ENCODE measurements at regions of chr12 and their contacts with region 1.

Region 1: GRCh38 chr12:116880817-116881324 is 370 bp downstream of the HRK start:
- DNase-seq: peak in 2 of 10 donors; percentile 52 to 56
- H3K4me3 ChIP-seq: peak overlapping the region; percentile 8 to 71 (median 56)
- H3K27ac ChIP-seq: peak overlapping the region in 3 of 59 donors; percentile 16 to 44 (median 44)
- H3K27me3 ChIP-seq: peaks cover 0 to 55% (median 23%) of the 10 kb centered on the region in 45 donors
- CTCF ChIP-seq: peak in 2 of 56 donors; percentile 8 to 24

Region 2: DNA sequence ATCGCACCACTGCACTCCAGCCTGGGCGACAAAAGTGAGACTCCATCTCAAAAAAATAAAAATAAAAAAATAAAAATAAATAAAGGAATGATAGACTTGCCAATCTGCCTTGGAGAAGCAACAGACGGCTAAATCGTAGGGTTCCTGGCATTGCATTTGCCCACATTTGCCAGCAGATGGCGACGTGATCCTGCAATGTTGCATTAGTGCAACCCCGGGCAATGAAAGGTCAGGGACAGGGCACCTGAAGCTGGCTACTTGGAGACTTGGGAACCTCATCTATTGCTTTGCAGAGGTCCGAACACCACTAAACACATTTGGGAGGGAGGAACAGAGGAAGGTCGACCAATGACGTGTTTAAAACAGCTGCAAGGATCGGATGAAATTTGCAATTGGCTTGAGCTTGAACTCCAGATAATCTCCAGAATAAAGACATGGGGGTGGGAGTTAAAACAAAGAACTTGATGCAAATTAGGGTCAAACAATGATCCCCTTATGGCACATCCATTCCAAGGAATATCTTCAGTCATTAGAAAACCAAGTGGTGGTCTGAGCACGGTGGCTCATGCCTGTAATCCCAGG is 177.6 kb before region 1 on chr12:
- intact Hi-C with region 1: loop called in 1 of 2 experiments (anchors 2 kb)
- DNase-seq: peak; percentile 64 to 83 (median 70)
- H3K4me3 ChIP-seq: peak overlapping the region in 1 of 59 donors; percentile 9
- H3K27ac ChIP-seq: peak overlapping the region in 6 of 59 donors; percentile 6 to 68 (median 20)
- H3K27me3 ChIP-seq: no peaks in the 10 kb centered on the region
- CTCF ChIP-seq: peak; percentile 83 to 98 (median 92)

Region 3: DNA sequence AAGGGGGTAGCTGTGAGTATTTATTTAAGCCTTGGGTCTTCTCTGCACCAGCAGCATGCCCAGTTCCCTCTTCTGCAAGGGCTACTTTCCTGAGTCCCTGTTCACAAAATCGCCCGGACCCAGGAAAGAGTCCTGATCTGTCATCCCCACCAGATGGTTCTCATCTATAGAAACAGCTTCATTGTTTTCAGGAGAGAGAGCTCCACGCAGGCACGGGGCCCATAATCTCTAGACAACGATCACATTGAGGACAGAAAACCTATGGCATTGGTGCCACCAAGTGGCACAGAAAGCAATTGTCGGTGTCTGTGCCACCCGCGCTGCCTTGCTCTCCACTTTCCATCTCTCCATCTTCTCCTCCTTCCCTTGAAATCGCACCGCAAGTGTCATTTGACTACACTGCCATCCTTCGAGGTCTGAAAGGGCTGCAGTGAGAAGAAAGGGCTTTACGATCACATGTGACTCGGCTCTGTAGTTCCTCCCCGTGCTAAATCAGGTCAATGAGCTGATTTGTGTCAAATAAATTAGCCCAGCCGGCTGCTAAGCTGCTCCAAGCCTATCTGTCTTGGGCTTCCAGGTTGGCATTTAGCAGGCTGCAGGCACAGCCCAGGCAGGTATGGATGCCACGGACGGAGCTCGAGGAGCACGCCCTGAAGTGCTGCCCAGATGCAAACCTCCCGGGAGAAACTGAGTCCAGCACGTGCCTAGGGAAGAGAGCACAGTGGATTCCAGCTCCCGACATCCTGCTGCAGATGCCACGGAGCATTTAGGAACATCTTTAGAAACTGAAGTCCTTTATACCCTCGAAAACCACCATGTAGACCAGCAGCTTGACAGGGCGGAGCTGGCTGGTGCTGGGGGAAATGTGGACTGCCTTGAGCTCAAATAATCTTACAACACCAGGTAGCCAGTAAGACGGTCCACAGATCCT is 171.8 kb before region 1 on chr12:
- intact Hi-C with region 1: loop called in 1 of 2 experiments (anchors 5 kb)
- DNase-seq: peak; percentile 75 to 97 (median 90)
- H3K4me3 ChIP-seq: peak overlapping the region; percentile 29 to 66 (median 50)
- H3K27ac ChIP-seq: peak overlapping the region in 57 of 59 donors; percentile 21 to 95 (median 84)
- H3K27me3 ChIP-seq: no peaks in the 10 kb centered on the region
- CTCF ChIP-seq: peak; percentile 61 to 95 (median 84)

Region 4: DNA sequence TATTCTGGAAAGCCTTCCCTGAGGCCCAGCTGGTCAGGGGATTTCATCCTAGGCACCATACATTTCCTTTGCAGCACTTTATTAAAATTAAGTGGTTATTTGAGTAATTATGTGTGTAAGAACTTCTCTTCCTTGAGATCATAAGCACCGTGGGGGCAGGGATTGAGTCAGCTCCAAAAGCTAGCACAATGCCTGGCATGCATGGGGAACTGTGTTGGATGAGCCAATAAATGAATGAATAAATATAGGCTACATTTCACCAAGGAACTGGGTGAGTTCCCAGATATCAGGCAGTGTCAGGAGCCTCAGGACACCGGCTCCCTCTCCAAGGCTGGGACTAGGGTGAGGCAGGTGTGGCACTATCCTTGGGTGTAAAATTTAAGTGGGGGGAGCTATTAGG is 392.2 kb after region 1 on chr12:
- intact Hi-C with region 1: no loop called
- DNase-seq: no peak
- H3K4me3 ChIP-seq: no peak overlapping the region
- H3K27ac ChIP-seq: no peak overlapping the region
- H3K27me3 ChIP-seq: peaks cover 0 to 2% (median 0%) of the 10 kb centered on the region in 45 donors
- CTCF ChIP-seq: no peak

Measured in dorsolateral prefrontal cortex (tissue), 120 donors.